ENCODE measurements at regions of chr5 and their contacts with region 1.

Region 1: DNA sequence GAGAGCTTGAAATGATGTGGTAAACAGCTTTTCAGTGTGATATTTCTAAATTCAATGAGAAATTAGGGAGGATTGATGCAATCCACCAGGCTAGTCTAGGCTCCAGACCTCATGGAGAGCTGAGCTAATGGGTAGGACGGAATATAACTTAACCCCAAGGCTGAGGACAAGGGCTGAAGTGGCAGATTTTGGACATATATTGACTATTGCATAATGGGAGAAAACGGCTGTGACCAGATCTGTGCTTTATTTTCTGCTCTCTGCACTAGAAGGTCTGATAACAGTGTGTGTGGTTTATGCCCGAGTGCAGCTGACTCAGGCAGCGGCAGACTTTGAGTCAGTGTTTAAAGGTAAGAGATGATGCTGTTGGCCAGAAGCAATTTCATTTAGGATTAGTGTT is 70.6 kb downstream of the ACTBL2 start:
- DNase-seq: no peak
- ATAC-seq: no peak
- H3K4me3 ChIP-seq: no peak overlapping the region
- H3K4me3 Mint-ChIP-seq: no peak overlapping the region
- H3K27ac ChIP-seq: no peak overlapping the region
- H3K27ac Mint-ChIP-seq: no peak overlapping the region
- H3K4me1 ChIP-seq: no peaks in the 10 kb centered on the region
- H3K4me1 Mint-ChIP-seq: no peaks in the 10 kb centered on the region
- H3K27me3 ChIP-seq: no peaks in the 10 kb centered on the region
- H3K27me3 Mint-ChIP-seq: peaks cover 0 to 6% (median 3%) of the 10 kb centered on the region in 5 donors

Region 2: GRCh38 chr5:57012511-57012910 is 399.5 kb before region 1 on chr5:
- CTCF ChIA-PET with region 1: no interaction called
- POLR2A ChIA-PET with region 1: no interaction called
- intact Hi-C with region 1: no loop called
- DNase-seq: no peak
- ATAC-seq: no peak
- H3K4me3 ChIP-seq: no peak overlapping the region
- H3K4me3 Mint-ChIP-seq: no peak overlapping the region
- H3K27ac ChIP-seq: no peak overlapping the region
- H3K27ac Mint-ChIP-seq: no peak overlapping the region
- H3K4me1 ChIP-seq: no peaks in the 10 kb centered on the region
- H3K4me1 Mint-ChIP-seq: no peaks in the 10 kb centered on the region
- H3K27me3 ChIP-seq: no peaks in the 10 kb centered on the region
- H3K27me3 Mint-ChIP-seq: peaks cover 0 to 7% (median 0%) of the 10 kb centered on the region in 5 donors

Region 3: DNA sequence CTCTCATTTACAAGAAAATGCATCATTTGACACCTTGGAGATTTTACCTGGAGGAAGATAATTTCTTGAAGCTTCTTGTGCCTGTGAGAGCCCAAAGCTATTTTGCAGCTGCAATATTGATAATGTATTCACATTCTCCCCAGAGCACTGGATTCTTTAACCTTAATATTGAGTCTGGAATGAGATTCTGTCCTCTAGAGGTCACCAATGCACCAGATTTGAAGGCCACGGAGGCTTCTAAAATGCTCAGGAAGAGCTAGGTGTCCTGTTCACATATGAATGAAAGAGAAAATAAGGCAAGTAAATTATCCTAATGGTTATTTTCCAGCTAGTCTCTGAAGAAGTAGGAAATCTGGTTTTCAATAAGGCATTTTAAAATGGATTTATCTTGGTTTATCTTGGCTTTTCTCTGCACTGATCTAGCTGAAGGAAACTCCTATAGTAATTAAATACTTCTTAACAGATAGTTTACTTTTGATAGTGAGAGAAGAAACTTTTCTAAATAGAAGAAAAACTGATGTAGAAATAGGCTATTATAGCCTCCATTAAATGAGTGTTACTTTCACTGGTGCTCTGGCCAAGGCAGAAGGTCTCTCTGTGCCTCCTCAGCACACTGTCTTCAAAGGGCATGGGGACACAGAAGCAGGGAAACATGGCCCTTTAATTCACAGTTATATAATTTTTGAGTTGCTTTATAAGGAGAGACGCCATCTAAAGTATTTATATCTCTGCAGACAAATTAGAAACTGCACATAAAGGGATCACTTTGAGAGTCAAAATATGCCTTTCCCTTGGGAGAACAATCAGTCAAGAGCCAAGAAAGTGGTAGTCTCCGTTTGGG is 367.6 kb after region 1 on chr5:
- CTCF ChIA-PET with region 1: no interaction called
- POLR2A ChIA-PET with region 1: no interaction called
- intact Hi-C with region 1: loop called in 1 of 2 experiments (anchors 1 kb)
- DNase-seq: peak in 5 of 9 donors; percentile 8 to 26 (median 18)
- ATAC-seq: peak; percentile 58
- H3K4me3 ChIP-seq: no peak overlapping the region
- H3K4me3 Mint-ChIP-seq: no peak overlapping the region
- H3K27ac ChIP-seq: no peak overlapping the region
- H3K27ac Mint-ChIP-seq: no peak overlapping the region
- H3K4me1 ChIP-seq: no peaks in the 10 kb centered on the region
- H3K4me1 Mint-ChIP-seq: no peaks in the 10 kb centered on the region
- H3K27me3 ChIP-seq: no peaks in the 10 kb centered on the region
- H3K27me3 Mint-ChIP-seq: peaks cover 0 to 4% (median 0%) of the 10 kb centered on the region in 5 donors